ENCODE measurements at regions of chr10 and their contacts with region 1.

Region 1: GRCh38 chr10:60434418-60435046 is 44.9 kb upstream of the ANK3 start:
- DNase-seq: peak; percentile 28
- H3K4me3 ChIP-seq: no peak overlapping the region
- H3K27ac ChIP-seq: no peak overlapping the region
- H3K4me1 ChIP-seq: peaks cover 7 to 14% (median 10%) of the 10 kb centered on the region in 4 donors
- H3K27me3 ChIP-seq: no peaks in the 10 kb centered on the region
- CTCF ChIP-seq: peak; percentile 60 to 77 (median 64)
- EP300 ChIP-seq: no peak
- POLR2A ChIP-seq: no peak

Region 2: DNA sequence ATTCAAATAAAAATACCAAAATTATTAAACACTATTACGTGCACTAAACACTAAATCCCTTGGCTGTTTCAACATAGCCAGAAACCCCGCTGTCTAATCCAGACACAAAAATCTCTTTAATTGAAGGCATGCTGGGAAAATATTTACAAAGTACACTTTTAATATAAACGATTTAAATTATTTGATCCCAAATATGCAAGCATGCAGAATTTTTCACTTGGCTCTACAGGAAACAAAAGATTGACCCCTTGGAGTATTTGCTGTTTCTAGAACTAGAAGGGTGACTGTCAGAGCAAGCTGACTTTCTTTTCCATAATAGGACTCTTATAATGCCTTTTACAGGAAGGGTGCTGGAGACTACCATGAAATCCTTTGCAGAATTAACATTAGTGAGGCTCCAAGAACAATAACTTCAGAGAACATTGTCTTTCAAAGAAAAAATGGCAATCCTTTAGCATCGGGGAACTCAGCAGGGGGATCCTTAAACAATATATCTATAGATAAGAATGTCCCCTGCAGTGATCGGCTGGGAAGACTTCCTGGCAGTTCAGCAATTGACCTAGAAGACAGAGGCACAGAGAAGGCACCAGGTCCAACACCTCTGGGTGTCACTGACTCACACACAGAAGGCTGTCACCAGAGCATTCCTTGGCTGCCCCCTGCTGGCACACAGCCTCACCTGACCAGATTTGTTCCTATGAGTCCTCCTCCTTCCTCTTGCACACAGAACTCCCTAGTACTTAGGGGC is 625.5 kb before region 1 on chr10:
- in situ Hi-C with region 1: no loop called
- intact Hi-C with region 1: no loop called
- DNase-seq: peak; percentile 86
- H3K4me3 ChIP-seq: no peak overlapping the region
- H3K27ac ChIP-seq: peak overlapping the region in 1 of 4 donors; percentile 4
- H3K4me1 ChIP-seq: peaks cover 0 to 8% (median 0%) of the 10 kb centered on the region in 4 donors
- H3K27me3 ChIP-seq: no peaks in the 10 kb centered on the region
- CTCF ChIP-seq: peak; percentile 60 to 79 (median 71)
- EP300 ChIP-seq: no peak
- POLR2A ChIP-seq: no peak

Region 3: GRCh38 chr10:60099998-60100747 is 334.4 kb before region 1 on chr10:
- in situ Hi-C with region 1: loop called (anchors 10 kb)
- intact Hi-C with region 1: no loop called
- DNase-seq: no peak
- H3K4me3 ChIP-seq: no peak overlapping the region
- H3K27ac ChIP-seq: no peak overlapping the region
- H3K4me1 ChIP-seq: peaks cover 0 to 11% (median 0%) of the 10 kb centered on the region in 4 donors
- H3K27me3 ChIP-seq: no peaks in the 10 kb centered on the region
- CTCF ChIP-seq: peak; percentile 48 to 59 (median 57)
- EP300 ChIP-seq: no peak
- POLR2A ChIP-seq: no peak

Region 4: GRCh38 chr10:60114765-60115586 is 319.6 kb before region 1 on chr10:
- in situ Hi-C with region 1: no loop called
- intact Hi-C with region 1: loop called (anchors 10 kb)
- DNase-seq: no peak
- H3K4me3 ChIP-seq: no peak overlapping the region
- H3K27ac ChIP-seq: no peak overlapping the region
- H3K4me1 ChIP-seq: peaks cover 0 to 11% (median 4%) of the 10 kb centered on the region in 4 donors
- H3K27me3 ChIP-seq: no peaks in the 10 kb centered on the region
- CTCF ChIP-seq: peak; percentile 52 to 60 (median 58)
- EP300 ChIP-seq: no peak
- POLR2A ChIP-seq: no peak

Region 5: GRCh38 chr10:60367431-60367830 is 67.1 kb before region 1 on chr10:
- in situ Hi-C with region 1: no loop called
- intact Hi-C with region 1: no loop called
- DNase-seq: no peak
- H3K4me3 ChIP-seq: no peak overlapping the region
- H3K27ac ChIP-seq: no peak overlapping the region
- H3K4me1 ChIP-seq: peaks cover 0 to 10% (median 1%) of the 10 kb centered on the region in 4 donors
- H3K27me3 ChIP-seq: no peaks in the 10 kb centered on the region
- CTCF ChIP-seq: no peak
- EP300 ChIP-seq: no peak
- POLR2A ChIP-seq: no peak

Region 6: GRCh38 chr10:60384708-60385398 is 49.7 kb before region 1 on chr10:
- in situ Hi-C with region 1: no loop called
- intact Hi-C with region 1: no loop called
- DNase-seq: no peak
- H3K4me3 ChIP-seq: no peak overlapping the region
- H3K27ac ChIP-seq: no peak overlapping the region
- H3K4me1 ChIP-seq: peaks cover 0 to 24% (median 6%) of the 10 kb centered on the region in 4 donors
- H3K27me3 ChIP-seq: no peaks in the 10 kb centered on the region
- CTCF ChIP-seq: no peak
- EP300 ChIP-seq: no peak
- POLR2A ChIP-seq: no peak

Region 7: GRCh38 chr10:60757420-60757895 is 322.9 kb after region 1 on chr10:
- in situ Hi-C with region 1: loop called in 2 of 4 experiments (anchors 25 kb)
- intact Hi-C with region 1: no loop called
- DNase-seq: no peak
- H3K4me3 ChIP-seq: no peak overlapping the region
- H3K27ac ChIP-seq: no peak overlapping the region
- H3K4me1 ChIP-seq: no peaks in the 10 kb centered on the region
- H3K27me3 ChIP-seq: no peaks in the 10 kb centered on the region
- CTCF ChIP-seq: no peak
- EP300 ChIP-seq: no peak
- POLR2A ChIP-seq: no peak

Measured in transverse colon (tissue), 4 donors.